Activated CD8-positive, alpha-beta memory T cell treated with anti-CD3 and anti-CD28 coated beads, Interleukin-2, amount 10 ng/mL, durations not matched to agents 7 days and 5 days (primary cell): ENCODE measurements at regions of chr2 and their contacts with region 1.

Region 1: GRCh38 chr2:38685116-38685735 is 19.3 kb downstream of the GALM start:
- DNase-seq: no peak
- ATAC-seq: no peak
- H3K4me3 Mint-ChIP-seq: no peak overlapping the region
- H3K27ac Mint-ChIP-seq: peak overlapping the region; percentile 33
- H3K4me1 Mint-ChIP-seq: peaks cover 61% of the 10 kb centered on the region
- H3K27me3 Mint-ChIP-seq: no peaks in the 10 kb centered on the region

Region 2: DNA sequence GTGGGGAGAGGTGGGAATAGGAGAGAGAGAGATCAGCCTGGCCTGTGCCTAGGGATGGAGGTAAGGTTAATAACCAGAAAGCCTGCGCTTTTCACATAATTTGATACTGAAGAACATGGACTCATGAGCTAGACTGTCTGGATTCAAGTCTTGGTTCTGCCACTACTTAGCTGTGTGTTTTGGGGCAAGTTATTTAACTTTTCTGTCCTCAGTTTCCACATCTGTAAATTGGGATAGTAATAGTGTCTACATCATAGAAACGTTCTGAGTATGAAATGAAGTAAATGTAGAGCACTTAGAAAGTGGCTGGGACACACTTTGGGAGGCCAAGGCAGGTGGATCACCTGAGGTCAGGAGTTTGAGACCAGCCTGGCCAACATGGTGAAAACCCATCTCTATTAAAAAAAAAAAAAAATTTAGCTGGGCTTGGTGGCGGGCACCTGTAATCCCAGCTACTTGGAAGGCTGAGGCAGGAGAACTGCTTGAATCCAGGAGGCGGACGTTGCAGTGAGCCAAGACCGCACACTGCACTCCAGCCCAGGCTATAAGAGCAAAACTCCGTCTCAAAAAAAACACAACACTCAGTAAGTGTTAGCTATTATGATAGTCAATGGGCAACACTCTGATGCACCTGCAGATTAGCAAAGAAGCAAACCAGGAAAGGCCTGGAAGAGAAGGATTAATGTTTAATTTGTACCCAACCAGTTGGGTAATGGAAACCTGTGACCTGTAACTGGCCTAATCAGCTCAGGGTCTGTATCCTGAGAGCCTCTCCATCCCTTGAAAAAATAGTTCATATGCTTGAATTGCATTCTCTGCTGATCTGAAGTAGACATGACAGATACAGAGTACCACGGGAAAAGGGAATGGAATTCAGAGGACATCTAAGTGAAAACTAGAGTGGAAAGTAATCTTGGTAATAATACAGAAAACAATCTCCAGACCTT is 12.5 kb before region 1 on chr2:
- CTCF ChIA-PET with region 1: interaction called, 20 read pairs
- DNase-seq: no peak
- ATAC-seq: no peak
- H3K4me3 Mint-ChIP-seq: no peak overlapping the region
- H3K27ac Mint-ChIP-seq: peak overlapping the region; percentile 45
- H3K4me1 Mint-ChIP-seq: peaks cover 74% of the 10 kb centered on the region
- H3K27me3 Mint-ChIP-seq: no peaks in the 10 kb centered on the region